ENCODE measurements at regions of chr1 and their contacts with region 1.

Region 1: GRCh38 chr1:161389691-161390558 is 22.2 kb upstream of the CFAP126 start:
- DNase-seq: peak; percentile 97
- H3K4me3 ChIP-seq: peak overlapping the region; percentile 51 to 61
- H3K27ac ChIP-seq: peak overlapping the region; percentile 88
- H3K4me1 ChIP-seq: no peaks in the 10 kb centered on the region
- H3K27me3 ChIP-seq: no peaks in the 10 kb centered on the region
- CTCF ChIP-seq: no peak
- POLR2A ChIP-seq: peak; percentile 94

Region 2: GRCh38 chr1:161314201-161314981 is 75.5 kb before region 1 on chr1 and contains the start of gene SDHC:
- intact Hi-C with region 1: loop called (anchors 10 kb)
- DNase-seq: peak; percentile 85
- H3K4me3 ChIP-seq: peak within 1 kb of the TSS; percentile 66 to 74
- H3K27ac ChIP-seq: peak within 1 kb of the TSS; percentile 86 to 88
- H3K4me1 ChIP-seq: no peaks in the 10 kb centered on the region
- H3K27me3 ChIP-seq: no peaks in the 10 kb centered on the region
- CTCF ChIP-seq: peak in 2 of 4 experiments; percentile 18 to 19
- POLR2A ChIP-seq: peak; percentile 64
- total RNA-seq, gene SDHC: 59.0 to 107 TPM

Region 3: GRCh38 chr1:161486806-161487741 is 97.1 kb after region 1 on chr1:
- intact Hi-C with region 1: no loop called
- DNase-seq: no peak
- H3K4me3 ChIP-seq: no peak overlapping the region
- H3K27ac ChIP-seq: no peak overlapping the region
- H3K4me1 ChIP-seq: no peaks in the 10 kb centered on the region
- H3K27me3 ChIP-seq: peaks cover 2% of the 10 kb centered on the region
- CTCF ChIP-seq: peak in 3 of 4 experiments; percentile 48 to 65 (median 49)
- POLR2A ChIP-seq: no peak